ENCODE measurements at regions of chr20 and their contacts with region 1.

Region 1: DNA sequence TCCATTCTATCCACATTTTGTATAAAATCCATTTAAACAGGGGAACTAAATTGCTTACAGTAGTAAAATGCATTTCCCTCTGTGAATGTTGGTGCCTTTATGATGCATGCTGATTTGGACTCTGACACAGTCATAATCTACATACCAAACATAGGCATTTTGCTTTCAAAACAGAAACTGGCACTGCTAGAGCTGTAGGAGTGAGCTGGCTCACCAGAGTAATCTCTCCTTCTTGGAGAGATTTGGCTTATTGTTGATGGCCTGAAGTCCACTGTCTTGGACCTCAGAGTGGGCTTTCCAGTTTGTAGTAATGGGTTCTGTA is 363.2 kb upstream of the FLRT3 start:
- DNase-seq: no peak
- ATAC-seq: peak; percentile 93
- H3K4me3 ChIP-seq: no peak overlapping the region
- H3K27ac ChIP-seq: no peak overlapping the region
- H3K4me1 ChIP-seq: peaks cover 3% of the 10 kb centered on the region; the same call in 1 of the 2 replicates
- H3K27me3 ChIP-seq: no peaks in the 10 kb centered on the region
- CTCF ChIP-seq: no peak
- EP300 ChIP-seq: no peak
- POLR2A ChIP-seq: no peak
- RAD21 ChIP-seq: no peak

Region 2: GRCh38 chr20:14582855-14583254 is 117.7 kb before region 1 on chr20:
- CTCF ChIA-PET with region 1: no interaction called
- POLR2A ChIA-PET with region 1: no interaction called
- RAD21 ChIA-PET with region 1: no interaction called
- SMC1A ChIA-PET with region 1: no interaction called
- in situ Hi-C with region 1: no loop called
- intact Hi-C with region 1: no loop called
- DNase-seq: no peak
- ATAC-seq: no peak
- H3K4me3 ChIP-seq: no peak overlapping the region
- H3K27ac ChIP-seq: no peak overlapping the region
- H3K4me1 ChIP-seq: no peaks in the 10 kb centered on the region
- H3K27me3 ChIP-seq: no peaks in the 10 kb centered on the region
- CTCF ChIP-seq: no peak
- EP300 ChIP-seq: no peak
- POLR2A ChIP-seq: no peak
- RAD21 ChIP-seq: no peak

Region 3: DNA sequence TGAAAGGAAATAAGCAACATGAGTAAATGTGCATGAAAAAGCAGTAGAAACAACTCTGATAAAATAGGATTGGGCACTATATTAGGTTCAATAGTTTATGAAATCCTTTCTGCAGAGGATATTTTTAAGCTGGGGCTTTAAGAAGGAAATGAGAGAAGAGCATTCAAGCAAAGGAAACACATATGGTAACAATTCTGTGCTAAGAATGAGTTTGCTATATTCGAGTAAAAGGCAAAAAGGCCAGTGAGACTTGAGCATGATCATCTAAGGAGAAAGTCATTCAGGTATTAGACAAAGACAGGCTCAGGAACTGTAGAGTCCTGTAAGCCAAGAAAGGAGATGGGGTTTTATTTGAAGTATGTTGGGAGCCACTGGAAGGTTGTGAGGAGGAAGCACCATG is 23.9 kb after region 1 on chr20:
- CTCF ChIA-PET with region 1: interaction called, 3 read pairs
- POLR2A ChIA-PET with region 1: no interaction called
- RAD21 ChIA-PET with region 1: interaction called, 11 read pairs
- SMC1A ChIA-PET with region 1: interaction called, 18 read pairs
- in situ Hi-C with region 1: no loop called
- intact Hi-C with region 1: no loop called
- DNase-seq: no peak
- ATAC-seq: peak; percentile 46
- H3K4me3 ChIP-seq: no peak overlapping the region
- H3K27ac ChIP-seq: 0 out of 2 replicates have a peak overlapping the region, but pooled peaks have one; percentile 32
- H3K4me1 ChIP-seq: no peaks in the 10 kb centered on the region
- H3K27me3 ChIP-seq: no peaks in the 10 kb centered on the region
- CTCF ChIP-seq: no peak
- EP300 ChIP-seq: no peak
- POLR2A ChIP-seq: no peak
- RAD21 ChIP-seq: no peak

Region 4: GRCh38 chr20:14732996-14733395 is 32.4 kb after region 1 on chr20:
- CTCF ChIA-PET with region 1: no interaction called
- POLR2A ChIA-PET with region 1: no interaction called
- RAD21 ChIA-PET with region 1: no interaction called
- SMC1A ChIA-PET with region 1: interaction called, 11 read pairs
- in situ Hi-C with region 1: no loop called
- intact Hi-C with region 1: no loop called
- DNase-seq: no peak
- ATAC-seq: no peak
- H3K4me3 ChIP-seq: no peak overlapping the region
- H3K27ac ChIP-seq: no peak overlapping the region
- H3K4me1 ChIP-seq: no peaks in the 10 kb centered on the region
- H3K27me3 ChIP-seq: no peaks in the 10 kb centered on the region
- CTCF ChIP-seq: no peak
- EP300 ChIP-seq: no peak
- POLR2A ChIP-seq: no peak
- RAD21 ChIP-seq: no peak

Region 5: GRCh38 chr20:14744723-14745122 is 44.1 kb after region 1 on chr20:
- CTCF ChIA-PET with region 1: no interaction called
- POLR2A ChIA-PET with region 1: no interaction called
- RAD21 ChIA-PET with region 1: interaction called, 16 read pairs
- SMC1A ChIA-PET with region 1: interaction called, 6 read pairs
- in situ Hi-C with region 1: no loop called
- intact Hi-C with region 1: no loop called
- DNase-seq: peak; percentile 70
- ATAC-seq: peak; percentile 91
- H3K4me3 ChIP-seq: no peak overlapping the region
- H3K27ac ChIP-seq: peak overlapping the region; percentile 46
- H3K4me1 ChIP-seq: no peaks in the 10 kb centered on the region
- H3K27me3 ChIP-seq: no peaks in the 10 kb centered on the region
- CTCF ChIP-seq: no peak
- EP300 ChIP-seq: no peak
- POLR2A ChIP-seq: no peak
- RAD21 ChIP-seq: no peak

Region 6: DNA sequence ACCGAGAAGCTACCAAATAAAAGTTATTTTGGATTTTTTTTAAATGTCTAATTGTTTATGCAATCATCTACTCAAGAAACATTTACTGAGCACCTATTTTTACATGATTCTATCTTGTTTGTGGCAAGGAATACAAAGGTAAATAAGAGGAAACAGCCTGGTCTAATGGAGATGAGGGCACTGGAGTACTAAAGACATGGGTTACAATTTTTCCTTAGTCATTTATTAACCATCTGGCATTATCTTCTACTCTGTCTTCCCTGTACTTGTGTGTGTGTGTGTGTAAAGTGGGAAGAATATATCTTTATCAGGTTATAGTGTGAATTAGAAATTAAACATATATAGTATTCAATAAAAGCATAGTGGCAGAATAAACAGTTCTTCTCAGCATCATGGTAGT is 92.3 kb after region 1 on chr20:
- CTCF ChIA-PET with region 1: no interaction called
- POLR2A ChIA-PET with region 1: no interaction called
- RAD21 ChIA-PET with region 1: no interaction called
- SMC1A ChIA-PET with region 1: no interaction called
- in situ Hi-C with region 1: no loop called
- intact Hi-C with region 1: no loop called
- DNase-seq: no peak
- ATAC-seq: no peak
- H3K4me3 ChIP-seq: no peak overlapping the region
- H3K27ac ChIP-seq: no peak overlapping the region
- H3K4me1 ChIP-seq: no peaks in the 10 kb centered on the region; the same call in 1 of the 2 replicates
- H3K27me3 ChIP-seq: no peaks in the 10 kb centered on the region
- CTCF ChIP-seq: no peak
- EP300 ChIP-seq: no peak
- POLR2A ChIP-seq: no peak
- RAD21 ChIP-seq: no peak

Measured in GM12878 (cell line).